RWPE1 (cell line): ENCODE measurements at regions of chr2 and their contacts with region 1.

Region 1: GRCh38 chr2:27335311-27335710 is 12.4 kb upstream of the MPV17 start:
- DNase-seq: no peak
- H3K27ac ChIP-seq: 0 out of 2 replicates have a peak overlapping the region, but pooled peaks have one; percentile 6
- CTCF ChIP-seq: no peak

Region 2: GRCh38 chr2:27038631-27039339 is 296.5 kb before region 1 on chr2:
- CTCF ChIA-PET with region 1: no interaction called
- POLR2A ChIA-PET with region 1: interaction called, 13 read pairs
- DNase-seq: no peak
- H3K27ac ChIP-seq: no peak overlapping the region
- CTCF ChIP-seq: no peak

Region 3: GRCh38 chr2:27390822-27391679 is 55.7 kb after region 1 on chr2:
- CTCF ChIA-PET with region 1: no interaction called
- POLR2A ChIA-PET with region 1: no interaction called
- DNase-seq: no peak
- H3K27ac ChIP-seq: no peak overlapping the region
- CTCF ChIP-seq: no peak